Activated CD4-positive, alpha-beta memory T cell treated with anti-CD3 and anti-CD28 coated beads for 36 hours (primary cell): ENCODE measurements at regions of chr19 and their contacts with region 1.

Region 1: DNA sequence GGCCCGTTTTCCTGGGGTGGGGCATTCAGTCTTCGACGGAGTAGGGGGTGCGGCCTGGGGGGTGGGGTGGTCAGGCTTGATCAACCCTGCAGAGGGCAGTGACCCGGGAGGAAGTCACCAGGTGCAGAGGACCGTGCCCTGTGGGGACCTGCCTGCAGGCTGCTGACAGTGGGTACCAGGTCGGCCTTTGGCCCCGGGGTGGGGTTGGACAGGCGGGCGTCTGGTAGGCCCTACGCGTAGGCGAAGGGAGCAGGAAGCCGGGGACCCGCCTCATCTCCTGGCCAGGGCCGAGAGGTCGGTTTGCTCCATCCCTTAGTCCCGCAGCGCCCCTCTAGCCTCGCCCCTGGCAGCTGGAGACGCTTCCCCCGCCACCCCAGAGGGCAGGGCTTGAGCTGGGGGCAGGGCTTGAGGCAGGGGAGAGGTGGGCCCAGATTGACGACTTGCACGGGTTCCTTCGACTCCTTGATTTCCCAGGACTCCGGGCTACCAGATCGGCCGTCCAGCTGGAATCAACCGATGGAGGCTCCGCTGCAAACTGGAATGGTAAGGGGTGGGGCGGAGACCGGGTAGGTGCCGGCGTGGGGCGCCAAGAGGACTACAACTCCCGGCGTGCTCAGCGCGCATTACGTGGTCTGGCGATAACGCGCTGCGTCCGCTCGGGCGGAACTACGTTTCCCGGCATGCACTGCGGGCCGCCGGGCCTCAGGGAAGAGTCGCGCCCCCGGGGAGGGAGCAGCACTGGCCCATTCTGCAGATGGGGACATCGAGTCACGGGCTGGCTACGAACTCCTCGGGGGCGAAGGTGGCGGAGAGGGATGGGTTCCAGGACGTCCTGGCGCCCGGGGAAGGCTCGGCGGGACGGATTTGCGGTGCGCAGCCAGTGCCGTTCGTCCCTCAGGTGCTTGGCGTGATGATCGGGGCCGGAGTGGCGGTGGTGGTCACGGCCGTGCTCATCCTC is at the start of gene PNPLA6:
- DNase-seq: peak; percentile 95
- H3K4me3 Mint-ChIP-seq: peak within 1 kb of the TSS; percentile 94
- H3K27ac Mint-ChIP-seq: peak within 1 kb of the TSS; percentile 85
- H3K4me1 Mint-ChIP-seq: peaks cover 15% of the 10 kb centered on the region
- H3K27me3 Mint-ChIP-seq: no peaks in the 10 kb centered on the region
- total RNA-seq, gene PNPLA6: 106 to 121 TPM

Region 2: GRCh38 chr19:7394731-7395359 is 140.5 kb before region 1 on chr19:
- CTCF ChIA-PET with region 1: no interaction called
- POLR2A ChIA-PET with region 1: no interaction called
- intact Hi-C with region 1: loop called (anchors 10 kb)
- DNase-seq: peak; percentile 95
- H3K4me3 Mint-ChIP-seq: peak overlapping the region; percentile 87
- H3K27ac Mint-ChIP-seq: peak overlapping the region; percentile 85
- H3K4me1 Mint-ChIP-seq: peaks cover 28% of the 10 kb centered on the region
- H3K27me3 Mint-ChIP-seq: no peaks in the 10 kb centered on the region

Region 3: DNA sequence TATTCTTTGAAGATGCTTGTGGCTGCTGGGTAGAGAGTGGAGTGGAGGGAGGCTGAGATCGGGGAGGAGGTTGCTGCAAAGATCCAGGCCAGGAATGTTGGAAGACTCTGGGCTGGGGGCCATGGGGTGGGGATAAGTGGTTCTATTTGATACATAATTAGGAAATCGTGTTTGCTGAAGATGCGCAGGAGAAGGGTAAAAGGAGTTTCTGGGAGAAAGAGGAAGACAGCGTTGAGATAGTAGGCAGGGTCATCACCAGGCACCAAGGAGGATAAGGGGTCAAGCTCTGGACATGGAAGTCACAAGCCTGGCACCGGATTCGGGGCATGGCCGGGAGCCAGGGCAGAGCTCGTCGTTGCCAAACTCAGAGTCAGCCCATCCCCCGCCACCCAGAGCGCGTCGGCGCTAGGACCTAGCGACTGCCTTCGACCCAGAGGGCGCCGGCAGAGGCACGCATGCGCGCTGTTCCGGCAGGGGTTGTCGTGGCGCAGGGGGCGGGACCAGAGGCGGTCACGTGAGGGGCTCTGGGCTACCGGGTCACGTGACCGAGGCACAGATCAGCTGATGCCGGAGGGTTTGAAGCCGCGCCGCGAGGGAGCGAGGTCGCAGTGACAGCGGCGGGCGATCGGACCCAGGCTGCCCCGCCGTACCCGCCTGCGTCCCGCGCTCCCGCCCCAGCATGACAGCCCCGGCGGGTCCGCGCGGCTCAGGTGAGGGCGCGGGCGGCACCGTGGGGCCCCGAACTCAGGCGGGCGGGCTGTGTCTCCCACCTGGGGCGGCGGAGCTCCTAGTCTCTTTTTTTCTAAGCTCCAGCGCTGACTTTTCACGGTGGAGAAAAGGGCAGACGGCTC is 13.0 kb before region 1 on chr19 and contains the start of gene MCOLN1:
- CTCF ChIA-PET with region 1: interaction called, 10 read pairs
- POLR2A ChIA-PET with region 1: interaction called, 22 read pairs
- intact Hi-C with region 1: loop called (anchors 1 kb)
- DNase-seq: peak; percentile 100
- H3K4me3 Mint-ChIP-seq: peak within 1 kb of the TSS; percentile 68
- H3K27ac Mint-ChIP-seq: peak within 1 kb of the TSS; percentile 16
- H3K4me1 Mint-ChIP-seq: peaks cover 10% of the 10 kb centered on the region
- H3K27me3 Mint-ChIP-seq: peaks cover 3% of the 10 kb centered on the region
- total RNA-seq, gene MCOLN1: 7.4 to 9.5 TPM

Region 4: GRCh38 chr19:7550987-7551761 is 15.9 kb after region 1 on chr19:
- CTCF ChIA-PET with region 1: no interaction called
- POLR2A ChIA-PET with region 1: no interaction called
- intact Hi-C with region 1: loop called (anchors 1 kb)
- DNase-seq: peak; percentile 50
- H3K4me3 Mint-ChIP-seq: no peak overlapping the region
- H3K27ac Mint-ChIP-seq: no peak overlapping the region
- H3K4me1 Mint-ChIP-seq: peaks cover 5% of the 10 kb centered on the region
- H3K27me3 Mint-ChIP-seq: no peaks in the 10 kb centered on the region

Region 5: GRCh38 chr19:7618771-7619514 is 83.6 kb after region 1 on chr19:
- CTCF ChIA-PET with region 1: no interaction called
- POLR2A ChIA-PET with region 1: no interaction called
- intact Hi-C with region 1: no loop called
- DNase-seq: no peak
- H3K4me3 Mint-ChIP-seq: no peak overlapping the region
- H3K27ac Mint-ChIP-seq: no peak overlapping the region
- H3K4me1 Mint-ChIP-seq: no peaks in the 10 kb centered on the region
- H3K27me3 Mint-ChIP-seq: no peaks in the 10 kb centered on the region